ENCODE measurements at regions of chr17 and their contacts with region 1.

Region 1: GRCh38 chr17:76397687-76398487 is 13.5 kb downstream of the SPHK1 start:
- DNase-seq: peak; percentile 96
- ATAC-seq: peak; percentile 95
- H3K4me3 Mint-ChIP-seq: no peak overlapping the region
- H3K27ac Mint-ChIP-seq: no peak overlapping the region
- H3K4me1 Mint-ChIP-seq: no peaks in the 10 kb centered on the region
- H3K27me3 Mint-ChIP-seq: no peaks in the 10 kb centered on the region
- CTCF ChIP-seq: peak; percentile 96

Region 2: DNA sequence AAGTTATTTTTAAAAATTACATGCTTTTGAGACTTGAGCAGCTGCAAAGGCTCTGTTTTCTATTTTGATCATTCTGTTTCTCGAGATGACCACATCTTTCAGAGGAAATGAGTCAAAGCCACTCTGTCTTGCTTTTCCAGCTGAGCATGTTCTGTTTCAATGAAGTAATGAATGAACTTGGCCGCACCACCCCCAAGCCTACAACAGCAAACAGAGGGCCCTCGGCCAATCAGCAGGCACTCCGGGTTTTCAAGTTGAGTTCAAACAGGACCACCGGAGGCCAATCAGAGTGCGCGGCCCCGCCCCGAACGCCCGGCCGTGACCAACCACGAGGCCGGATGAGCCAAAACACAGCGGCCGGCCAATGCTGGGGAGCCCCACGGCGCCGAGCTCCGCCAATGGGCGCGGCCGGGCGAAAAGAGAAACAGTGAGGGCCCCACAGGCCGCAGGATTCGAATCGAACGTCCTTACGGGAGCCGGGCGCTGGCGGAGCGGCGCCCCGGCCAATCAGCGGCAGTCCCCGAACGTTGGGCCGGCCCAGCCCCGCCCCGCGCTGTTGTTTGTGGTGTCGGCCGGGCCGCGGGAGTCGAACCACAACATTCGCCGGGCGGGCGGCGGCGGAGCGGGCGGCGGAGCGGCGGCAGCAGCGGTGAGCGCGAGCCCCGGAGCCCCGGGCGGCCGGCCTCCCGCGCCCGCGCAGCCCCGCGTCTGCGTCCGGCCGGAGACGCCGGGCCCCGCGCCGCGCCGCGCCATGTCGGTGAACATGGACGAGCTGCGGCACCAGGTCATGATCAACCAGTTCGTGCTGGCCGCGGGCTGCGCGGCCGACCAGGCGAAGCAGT is 132.9 kb before region 1 on chr17 and contains the start of gene UBALD2:
- CTCF ChIA-PET with region 1: no interaction called
- POLR2A ChIA-PET with region 1: no interaction called
- DNase-seq: peak; percentile 99
- ATAC-seq: peak; percentile 95
- H3K4me3 Mint-ChIP-seq: peak within 1 kb of the TSS; percentile 71
- H3K27ac Mint-ChIP-seq: peak within 1 kb of the TSS; percentile 80
- H3K4me1 Mint-ChIP-seq: peaks cover 43% of the 10 kb centered on the region
- H3K27me3 Mint-ChIP-seq: no peaks in the 10 kb centered on the region
- CTCF ChIP-seq: no peak
- total RNA-seq, gene UBALD2: 24.4 to 30.3 TPM (median 28.2 TPM) in 3 replicates

Region 3: DNA sequence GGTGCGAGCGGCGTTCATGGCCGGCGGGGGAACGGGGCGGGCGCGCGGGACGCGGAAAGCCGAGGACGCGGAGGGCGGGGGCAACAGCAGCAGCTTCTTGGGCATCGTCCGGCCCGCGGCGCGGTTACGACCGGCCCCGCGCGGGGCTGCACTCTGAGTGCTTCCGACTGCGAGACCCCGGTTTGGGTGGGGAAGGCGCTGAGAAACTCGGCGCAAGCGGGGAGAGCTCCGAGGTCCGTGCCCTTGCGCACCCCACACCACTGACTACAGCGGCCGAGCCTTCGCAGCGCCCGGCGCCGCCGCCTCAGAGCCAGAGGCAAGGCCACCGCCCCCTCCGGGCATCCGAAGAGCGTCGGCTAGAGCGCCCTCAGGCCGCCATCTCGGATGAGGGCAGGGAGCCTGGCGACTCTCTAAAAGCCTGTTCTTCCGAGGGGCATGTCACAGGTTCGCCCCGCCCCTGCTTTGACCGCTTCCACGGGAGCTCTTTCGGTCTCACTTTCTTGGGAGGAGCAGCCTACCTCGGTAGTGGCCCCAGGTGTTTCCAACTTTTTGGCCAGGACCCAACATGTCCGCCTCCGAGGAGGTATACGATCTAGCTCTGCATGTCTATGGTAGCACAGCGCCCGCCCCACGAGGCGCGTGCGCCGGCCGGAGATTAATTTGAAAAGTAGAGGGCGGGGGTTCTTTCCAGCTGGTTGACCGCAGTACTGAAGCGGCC is 44.1 kb before region 1 on chr17 and contains the start of gene PRPSAP1:
- CTCF ChIA-PET with region 1: interaction called, 32 read pairs
- POLR2A ChIA-PET with region 1: interaction called, 4 read pairs
- DNase-seq: peak; percentile 86
- ATAC-seq: peak; percentile 94
- H3K4me3 Mint-ChIP-seq: peak within 1 kb of the TSS; percentile 95
- H3K27ac Mint-ChIP-seq: peak within 1 kb of the TSS; percentile 100
- H3K4me1 Mint-ChIP-seq: peaks cover 27% of the 10 kb centered on the region
- H3K27me3 Mint-ChIP-seq: no peaks in the 10 kb centered on the region
- CTCF ChIP-seq: no peak
- total RNA-seq, gene PRPSAP1: 50.0 to 56.5 TPM (median 52.3 TPM) in 3 replicates

Region 4: GRCh38 chr17:76370261-76370993 is 27.5 kb before region 1 on chr17:
- CTCF ChIA-PET with region 1: interaction called, 68 read pairs
- POLR2A ChIA-PET with region 1: no interaction called
- DNase-seq: no peak
- ATAC-seq: peak; percentile 13; the same call in 1 of the 2 replicates
- H3K4me3 Mint-ChIP-seq: no peak overlapping the region
- H3K27ac Mint-ChIP-seq: peak overlapping the region; percentile 7; the same call in 1 of the 2 replicates
- H3K4me1 Mint-ChIP-seq: peaks cover 22% of the 10 kb centered on the region
- H3K27me3 Mint-ChIP-seq: no peaks in the 10 kb centered on the region; the same call in 1 of the 2 replicates
- CTCF ChIP-seq: no peak

Region 5: DNA sequence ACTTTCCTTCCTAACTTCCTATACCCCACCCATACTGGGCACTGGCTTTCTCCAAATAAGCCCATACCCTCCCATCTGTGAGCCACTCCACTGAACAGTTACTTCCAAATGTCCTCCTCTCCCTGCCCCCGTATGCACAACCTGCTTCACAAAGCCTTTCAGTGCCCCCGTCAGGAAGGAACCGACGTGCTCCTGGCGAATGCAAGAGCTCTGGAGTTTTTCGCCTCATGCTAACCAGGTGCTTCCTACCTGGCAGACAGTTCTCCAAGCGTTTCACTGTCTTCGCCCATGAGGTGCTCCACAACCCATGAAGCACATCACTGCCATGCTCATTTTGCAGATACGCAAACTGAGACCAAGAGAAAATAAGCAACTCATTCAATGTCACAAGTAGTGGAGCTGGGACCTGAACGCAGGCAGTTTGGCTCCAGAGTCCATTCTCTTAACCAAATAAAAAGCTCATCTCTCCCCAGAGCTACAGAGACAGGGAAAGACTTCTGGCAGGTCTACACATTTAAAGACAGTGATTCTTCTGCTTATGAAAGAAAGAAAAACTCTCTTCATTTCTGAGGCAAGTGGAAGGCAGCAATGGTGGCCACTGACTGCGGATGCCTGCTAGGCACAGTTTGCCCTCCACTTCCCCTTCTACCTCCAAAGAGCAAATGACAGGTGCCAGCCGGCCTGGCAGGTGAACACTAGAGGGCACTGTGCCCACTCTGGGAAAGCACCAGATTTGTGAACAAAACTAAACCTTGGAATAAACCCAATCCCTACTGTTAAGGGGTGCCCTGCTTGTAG is 10.4 kb after region 1 on chr17:
- CTCF ChIA-PET with region 1: interaction called, 36 read pairs
- POLR2A ChIA-PET with region 1: no interaction called
- DNase-seq: peak; percentile 82
- ATAC-seq: peak; percentile 76
- H3K4me3 Mint-ChIP-seq: no peak overlapping the region
- H3K27ac Mint-ChIP-seq: no peak overlapping the region; the same call in 1 of the 2 replicates
- H3K4me1 Mint-ChIP-seq: peaks cover 11% of the 10 kb centered on the region; the same call in 1 of the 2 replicates
- H3K27me3 Mint-ChIP-seq: no peaks in the 10 kb centered on the region
- CTCF ChIP-seq: peak; percentile 59; the same call in 1 of the 2 replicates

Region 6: DNA sequence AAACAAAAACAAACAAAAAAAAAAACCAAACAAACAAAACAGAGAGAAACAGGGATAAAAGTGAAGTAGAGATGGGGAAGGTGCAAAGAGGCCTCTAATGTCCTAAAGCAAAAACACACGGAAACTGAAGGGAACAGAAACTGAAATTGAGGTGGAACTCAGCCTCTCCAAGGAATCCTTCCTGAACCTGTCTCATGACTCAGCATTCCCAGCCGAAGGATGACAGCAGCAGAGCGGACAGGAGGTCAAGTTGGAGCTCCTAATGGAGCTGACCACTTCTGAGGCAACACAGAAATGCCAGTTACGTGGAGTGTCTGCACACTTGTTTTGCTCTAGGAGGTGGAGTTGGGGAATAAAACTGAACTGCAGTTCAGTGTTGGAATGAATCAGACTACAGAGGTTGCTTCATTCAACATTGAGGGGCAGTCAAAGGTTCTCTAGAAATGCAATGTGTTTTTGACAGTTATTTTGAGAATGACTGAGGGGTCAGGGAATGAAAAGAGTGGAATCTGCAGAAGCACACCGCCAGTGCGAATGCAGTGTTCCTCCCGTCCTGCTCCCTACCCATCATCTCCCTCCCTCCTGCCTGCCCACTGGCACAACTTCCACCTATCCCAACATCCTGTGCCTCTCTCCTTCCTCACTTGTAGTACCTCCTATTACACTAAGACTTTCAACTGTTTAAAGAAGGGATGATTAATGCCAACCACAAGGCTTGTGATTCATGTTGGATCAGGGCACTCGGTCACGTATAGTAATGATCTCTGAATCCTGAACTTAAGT is 48.8 kb after region 1 on chr17:
- CTCF ChIA-PET with region 1: interaction called, 14 read pairs
- POLR2A ChIA-PET with region 1: no interaction called
- DNase-seq: no peak
- ATAC-seq: no peak
- H3K4me3 Mint-ChIP-seq: peak overlapping the region; percentile 50
- H3K27ac Mint-ChIP-seq: peak overlapping the region; percentile 86
- H3K4me1 Mint-ChIP-seq: peaks cover 94% of the 10 kb centered on the region
- H3K27me3 Mint-ChIP-seq: no peaks in the 10 kb centered on the region
- CTCF ChIP-seq: no peak